Posterior cingulate gyrus (tissue), 11 donors: ENCODE measurements at regions of chr17 and their contacts with region 1.

Region 1: GRCh38 chr17:76506408-76507349 is 5.5 kb upstream of the RHBDF2 start:
- DNase-seq: peak; percentile 76 to 98 (median 92)

Region 2: GRCh38 chr17:76302606-76303005 is 204.1 kb before region 1 on chr17:
- intact Hi-C with region 1: loop called (anchors 2 kb)
- DNase-seq: peak in 1 of 10 donors; percentile 3

Region 3: GRCh38 chr17:76408052-76408849 is 98.4 kb before region 1 on chr17:
- intact Hi-C with region 1: loop called (anchors 5 kb)
- DNase-seq: peak in 6 of 10 donors; percentile 32 to 92 (median 75)

Region 4: GRCh38 chr17:76466775-76467130 is 39.9 kb before region 1 on chr17:
- intact Hi-C with region 1: loop called (anchors 1 kb)
- DNase-seq: peak in 1 of 10 donors; percentile 73

Region 5: GRCh38 chr17:77036807-77037381 is 530.2 kb after region 1 on chr17:
- intact Hi-C with region 1: no loop called
- DNase-seq: peak; percentile 22 to 96 (median 74)